ENCODE measurements at regions of chr13 and their contacts with region 1.

Region 1: GRCh38 chr13:95834134-95834765 is 157.3 kb downstream of the DNAJC3 start:
- DNase-seq: peak; percentile 73

Region 2: GRCh38 chr13:95624020-95624419 is 210.2 kb before region 1 on chr13:
- CTCF ChIA-PET with region 1: interaction called, 30 read pairs
- POLR2A ChIA-PET with region 1: no interaction called
- DNase-seq: peak; percentile 46